ENCODE measurements at regions of chr11 and their contacts with region 1.

Region 1: GRCh38 chr11:43573233-43573632 is 107.3 kb upstream of the HSD17B12 start:
- DNase-seq: peak; percentile 46
- ATAC-seq: peak; percentile 47
- H3K4me3 Mint-ChIP-seq: no peak overlapping the region
- H3K27ac Mint-ChIP-seq: no peak overlapping the region
- H3K4me1 Mint-ChIP-seq: peaks cover 19% of the 10 kb centered on the region
- H3K27me3 Mint-ChIP-seq: peaks cover 75% of the 10 kb centered on the region

Region 2: GRCh38 chr11:43561832-43562231 is 11.4 kb before region 1 on chr11:
- CTCF ChIA-PET with region 1: interaction called, 21 read pairs
- POLR2A ChIA-PET with region 1: no interaction called
- intact Hi-C with region 1: no loop called
- DNase-seq: no peak
- ATAC-seq: no peak
- H3K4me3 Mint-ChIP-seq: no peak overlapping the region
- H3K27ac Mint-ChIP-seq: no peak overlapping the region
- H3K4me1 Mint-ChIP-seq: peaks cover 15% of the 10 kb centered on the region
- H3K27me3 Mint-ChIP-seq: peaks cover 42% of the 10 kb centered on the region